MCF 10A (cell line): ENCODE measurements at regions of chr1 and their contacts with region 1.

Region 1: DNA sequence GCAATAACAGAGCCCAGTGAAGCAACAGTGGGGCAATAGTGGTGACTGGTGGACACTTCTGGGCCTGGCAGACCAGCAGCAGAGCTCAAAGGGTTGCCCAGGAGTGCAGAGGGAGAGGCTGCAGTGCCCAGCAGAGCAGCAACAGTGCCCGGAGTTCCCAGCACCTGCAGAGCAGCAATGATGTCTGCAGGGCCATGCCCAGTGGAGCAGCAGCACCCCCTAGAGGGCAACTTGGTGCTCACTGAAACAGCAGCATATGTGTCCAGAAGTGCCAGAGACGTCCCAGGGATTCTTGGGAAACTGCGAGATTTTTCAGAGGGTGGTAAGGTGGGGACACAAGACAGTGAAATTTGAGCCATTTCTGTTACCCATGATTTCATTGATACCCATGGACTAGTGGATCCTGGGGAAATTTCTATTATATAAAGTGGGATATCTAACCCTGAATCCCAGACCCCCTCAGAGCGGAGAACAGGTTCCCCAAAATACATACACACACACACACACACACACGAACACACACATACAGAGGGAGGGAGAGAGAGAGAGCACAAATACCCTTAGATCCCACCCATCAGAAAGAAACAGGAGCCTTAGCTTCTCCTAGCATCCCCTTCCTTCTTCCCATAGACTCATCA is 156.9 kb upstream of the GJB5 start:
- DNase-seq: peak; percentile 70
- H3K4me3 Mint-ChIP-seq: no peak overlapping the region
- H3K27ac Mint-ChIP-seq: no peak overlapping the region
- H3K4me1 Mint-ChIP-seq: no peaks in the 10 kb centered on the region
- H3K27me3 Mint-ChIP-seq: peaks cover 31% of the 10 kb centered on the region
- CTCF ChIP-seq: peak; percentile 96

Region 2: DNA sequence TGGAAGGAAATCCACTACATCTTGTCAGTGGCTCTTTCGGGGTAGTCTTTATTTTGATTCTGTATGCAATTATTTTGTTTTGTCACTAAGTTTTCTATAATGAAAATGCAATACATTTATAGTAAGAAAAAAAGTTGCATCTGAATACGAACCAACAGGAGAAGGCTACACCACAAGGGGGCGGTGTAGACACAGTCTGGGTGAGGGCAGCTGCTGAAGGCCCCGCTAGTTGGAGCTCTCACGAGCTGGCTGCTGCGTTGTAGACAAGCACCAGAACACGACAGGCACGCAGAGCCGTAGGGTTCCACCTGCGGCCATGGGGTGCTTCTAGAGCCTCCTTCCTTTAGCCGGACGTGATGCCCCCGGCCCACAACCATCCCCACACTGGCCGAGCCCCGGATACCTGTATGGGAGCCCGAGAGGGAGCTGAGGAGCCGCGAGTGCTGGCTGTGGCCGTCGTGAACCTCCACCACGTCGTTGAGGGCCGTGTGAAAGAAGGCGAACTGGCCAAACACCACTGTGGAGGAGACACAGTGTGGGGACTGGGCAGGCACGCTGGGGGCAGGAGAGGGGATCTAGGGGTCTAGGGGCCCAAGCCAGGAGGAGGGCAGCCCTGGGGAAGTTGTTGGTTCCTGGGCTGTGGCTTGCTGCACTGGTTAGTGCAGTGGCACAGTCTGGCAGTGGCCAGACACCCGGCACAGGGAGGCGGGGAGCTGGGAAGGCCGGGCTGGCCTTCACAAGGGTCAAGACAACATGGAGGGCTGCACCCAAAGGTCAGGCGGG is 964.8 kb before region 1 on chr1:
- CTCF ChIA-PET with region 1: interaction called, 5 read pairs
- POLR2A ChIA-PET with region 1: no interaction called
- intact Hi-C with region 1: loop called (anchors 1 kb)
- DNase-seq: peak; percentile 88
- H3K4me3 Mint-ChIP-seq: no peak overlapping the region
- H3K27ac Mint-ChIP-seq: no peak overlapping the region
- H3K4me1 Mint-ChIP-seq: peaks cover 6% of the 10 kb centered on the region
- H3K27me3 Mint-ChIP-seq: peaks cover 62% of the 10 kb centered on the region
- CTCF ChIP-seq: peak; percentile 94

Region 3: DNA sequence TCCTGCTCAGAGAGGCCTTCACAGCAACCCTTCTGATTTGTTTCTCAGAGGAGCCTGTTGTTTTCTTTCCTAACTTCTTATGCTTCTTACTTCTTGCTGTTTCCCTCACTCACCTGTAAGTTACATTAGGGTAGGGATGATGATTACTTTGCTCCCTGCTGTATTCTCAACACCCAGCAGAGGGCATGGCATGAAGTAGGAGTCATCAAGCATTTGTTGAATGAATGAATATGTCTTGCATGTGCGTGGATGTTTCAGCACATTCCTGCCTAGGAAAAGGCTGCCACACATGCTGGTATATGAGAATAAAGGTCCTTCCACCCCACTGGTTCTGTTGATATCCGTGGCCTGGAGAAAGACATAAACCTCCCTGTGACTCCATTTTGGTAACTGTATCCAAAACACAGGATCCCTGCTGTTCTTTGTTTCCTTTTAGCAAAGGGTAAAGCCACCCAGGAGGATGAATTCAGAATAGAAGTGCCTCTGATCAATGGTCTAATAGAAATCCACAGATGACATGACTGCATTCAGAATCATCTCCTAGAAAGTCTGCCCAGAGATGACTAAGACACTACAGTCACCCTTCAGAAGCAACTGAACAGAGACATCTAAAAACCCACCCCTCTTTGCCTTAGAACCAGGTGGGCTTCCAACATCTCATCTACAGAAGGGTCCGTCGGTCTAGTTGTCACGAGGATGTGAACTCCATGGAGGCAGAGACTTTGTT is 956.7 kb before region 1 on chr1:
- CTCF ChIA-PET with region 1: interaction called, 5 read pairs
- POLR2A ChIA-PET with region 1: no interaction called
- intact Hi-C with region 1: loop called (anchors 1 kb)
- DNase-seq: peak; percentile 45
- H3K4me3 Mint-ChIP-seq: no peak overlapping the region
- H3K27ac Mint-ChIP-seq: no peak overlapping the region
- H3K4me1 Mint-ChIP-seq: no peaks in the 10 kb centered on the region
- H3K27me3 Mint-ChIP-seq: peaks cover 54% of the 10 kb centered on the region
- CTCF ChIP-seq: peak; percentile 43

Region 4: GRCh38 chr1:33735621-33736020 is 862.4 kb before region 1 on chr1:
- CTCF ChIA-PET with region 1: interaction called, 6 read pairs
- POLR2A ChIA-PET with region 1: no interaction called
- intact Hi-C with region 1: loop called (anchors 5 kb)
- DNase-seq: no peak
- H3K4me3 Mint-ChIP-seq: no peak overlapping the region
- H3K27ac Mint-ChIP-seq: no peak overlapping the region
- H3K4me1 Mint-ChIP-seq: no peaks in the 10 kb centered on the region
- H3K27me3 Mint-ChIP-seq: peaks cover 13% of the 10 kb centered on the region
- CTCF ChIP-seq: no peak

Region 5: DNA sequence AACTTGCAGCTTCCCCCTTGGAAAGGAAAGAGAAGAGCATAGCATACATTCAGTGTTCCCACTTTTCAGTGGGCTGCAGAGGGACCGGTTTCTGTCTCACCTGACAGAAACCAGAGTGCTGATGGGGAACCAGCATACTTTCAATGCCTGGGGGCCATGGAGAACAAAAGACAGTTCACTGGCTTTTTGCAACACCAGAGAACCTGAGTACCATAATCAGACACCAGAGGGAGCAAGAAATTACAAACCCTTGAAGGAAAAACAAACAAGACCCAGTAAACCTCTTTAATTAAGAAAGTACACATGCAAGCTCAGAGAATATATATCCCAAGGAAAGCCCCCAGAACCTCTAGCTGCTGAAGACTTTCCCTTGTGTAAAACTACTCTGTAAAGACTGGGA is 484.1 kb before region 1 on chr1:
- CTCF ChIA-PET with region 1: interaction called, 31 read pairs
- POLR2A ChIA-PET with region 1: no interaction called
- intact Hi-C with region 1: no loop called
- DNase-seq: peak; percentile 22
- H3K4me3 Mint-ChIP-seq: no peak overlapping the region
- H3K27ac Mint-ChIP-seq: no peak overlapping the region
- H3K4me1 Mint-ChIP-seq: no peaks in the 10 kb centered on the region
- H3K27me3 Mint-ChIP-seq: no peaks in the 10 kb centered on the region
- CTCF ChIP-seq: peak; percentile 10

Region 6: DNA sequence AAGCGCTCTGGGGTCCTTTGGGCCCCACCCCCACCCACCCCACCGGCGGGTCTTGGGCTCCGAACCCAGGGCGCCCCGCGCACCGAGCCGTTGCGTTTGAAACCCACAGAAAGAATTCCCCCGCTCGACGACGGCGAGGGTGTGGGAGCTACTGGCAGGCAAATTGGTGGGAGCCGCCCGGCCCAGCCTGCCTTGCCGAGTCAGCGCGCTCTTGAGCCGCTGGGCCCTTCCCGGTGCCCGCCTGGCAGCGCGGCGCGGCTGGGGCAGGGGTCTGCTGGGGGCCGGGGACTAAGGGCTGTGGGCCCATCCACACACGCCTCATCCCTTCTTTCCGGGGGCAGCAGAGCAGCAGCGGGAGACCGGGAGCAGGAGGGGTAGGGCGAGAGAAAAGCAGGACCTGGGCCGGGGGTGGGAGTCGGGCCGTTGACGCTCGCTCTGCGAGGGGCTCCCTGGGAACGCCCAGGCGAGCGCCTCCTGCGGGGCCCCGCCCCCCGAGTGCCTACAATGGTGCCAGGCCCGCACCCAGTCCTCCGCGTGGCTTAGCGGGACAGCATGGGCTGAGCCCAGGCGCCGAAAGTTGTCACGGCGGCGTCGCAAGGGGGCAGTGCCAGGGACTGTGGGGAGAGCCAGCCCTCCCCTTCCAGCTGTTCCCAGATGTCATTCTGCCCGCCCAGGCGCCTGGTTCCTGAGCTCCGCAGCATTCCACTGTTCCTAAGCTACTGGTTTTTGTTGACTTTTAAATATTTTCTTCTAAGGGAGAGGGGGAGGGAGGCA is 421.0 kb before region 1 on chr1 and contains the start of gene C1orf94:
- CTCF ChIA-PET with region 1: no interaction called
- POLR2A ChIA-PET with region 1: no interaction called
- intact Hi-C with region 1: no loop called
- DNase-seq: no peak
- H3K4me3 Mint-ChIP-seq: no peak within 1 kb of the TSS
- H3K27ac Mint-ChIP-seq: no peak within 1 kb of the TSS
- H3K4me1 Mint-ChIP-seq: no peaks in the 10 kb centered on the region
- H3K27me3 Mint-ChIP-seq: no peaks in the 10 kb centered on the region
- CTCF ChIP-seq: no peak
- total RNA-seq, gene C1orf94: not detected in 2 replicates